Adrenal gland (tissue), 19 donors: ENCODE measurements at regions of chr2 and their contacts with region 1.

Region 1: DNA sequence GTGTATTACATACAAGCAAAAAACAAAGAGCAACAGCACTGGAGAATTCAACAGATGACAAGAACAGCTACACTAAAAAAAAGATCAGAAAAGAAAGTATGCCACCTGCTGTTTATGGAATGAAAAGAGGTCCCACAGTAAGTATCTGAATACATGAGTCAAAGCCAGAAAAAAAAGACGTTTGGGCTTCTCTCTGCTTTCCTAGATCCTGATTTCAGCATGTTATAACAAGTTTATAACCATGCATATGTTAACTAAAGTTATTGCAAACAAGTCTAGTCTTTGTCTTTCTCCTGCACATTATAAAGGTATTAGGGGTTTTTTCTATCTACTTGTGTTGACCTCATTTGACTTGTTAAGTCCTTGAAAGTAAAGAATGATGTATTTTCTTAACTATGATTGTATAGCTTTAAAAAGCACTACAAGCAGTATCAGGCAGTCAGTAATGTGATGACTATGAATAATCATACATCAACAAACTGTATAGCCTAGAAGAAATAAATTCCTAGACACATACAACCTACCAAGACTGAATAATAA is 108.5 kb upstream of the COL5A2 start:
- DNase-seq: no peak
- H3K4me3 ChIP-seq: no peak overlapping the region
- H3K27ac ChIP-seq: no peak overlapping the region
- H3K4me1 ChIP-seq: peaks cover 0 to 20% of the 10 kb centered on the region in 2 donors
- H3K27me3 ChIP-seq: no peaks in the 10 kb centered on the region
- CTCF ChIP-seq: peak; percentile 29 to 82 (median 60)
- POLR2A ChIP-seq: no peak

Region 2: DNA sequence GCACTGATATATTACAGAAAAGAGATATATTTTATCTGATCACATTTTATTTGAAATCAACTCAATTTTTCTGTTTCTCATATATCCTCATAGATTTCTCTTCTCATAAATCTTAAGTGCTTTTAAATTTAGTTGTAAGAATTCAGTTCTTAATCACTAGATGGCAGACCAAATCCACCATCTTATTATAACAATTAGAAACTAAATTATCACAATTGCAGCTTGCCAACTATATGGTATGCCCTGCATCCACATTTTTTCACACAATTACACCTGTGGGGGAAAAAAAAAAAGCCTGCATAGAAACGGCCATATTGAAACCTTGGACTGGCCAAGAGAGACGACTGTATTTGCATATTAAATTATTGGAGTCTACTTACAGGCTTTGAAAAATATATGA is 172.9 kb before region 1 on chr2:
- intact Hi-C with region 1: loop called in 1 of 2 experiments (anchors 10 kb)
- DNase-seq: no peak
- H3K4me3 ChIP-seq: no peak overlapping the region
- H3K27ac ChIP-seq: no peak overlapping the region
- H3K4me1 ChIP-seq: peaks cover 0 to 4% of the 10 kb centered on the region in 2 donors
- H3K27me3 ChIP-seq: no peaks in the 10 kb centered on the region
- CTCF ChIP-seq: peak in 4 of 6 experiments; percentile 17 to 38 (median 29)
- POLR2A ChIP-seq: no peak

Region 3: GRCh38 chr2:189142893-189143759 is 144.9 kb before region 1 on chr2:
- intact Hi-C with region 1: loop called in 1 of 2 experiments (anchors 10 kb)
- DNase-seq: peak; percentile 24 to 65 (median 45)
- H3K4me3 ChIP-seq: no peak overlapping the region
- H3K27ac ChIP-seq: no peak overlapping the region
- H3K4me1 ChIP-seq: no peaks in the 10 kb centered on the region
- H3K27me3 ChIP-seq: no peaks in the 10 kb centered on the region
- CTCF ChIP-seq: peak; percentile 65 to 92 (median 69)
- POLR2A ChIP-seq: no peak

Region 4: GRCh38 chr2:189191766-189192165 is 96.3 kb before region 1 on chr2:
- intact Hi-C with region 1: no loop called
- DNase-seq: no peak
- H3K4me3 ChIP-seq: no peak overlapping the region
- H3K27ac ChIP-seq: no peak overlapping the region
- H3K4me1 ChIP-seq: no peaks in the 10 kb centered on the region
- H3K27me3 ChIP-seq: no peaks in the 10 kb centered on the region
- CTCF ChIP-seq: no peak
- POLR2A ChIP-seq: no peak

Region 5: DNA sequence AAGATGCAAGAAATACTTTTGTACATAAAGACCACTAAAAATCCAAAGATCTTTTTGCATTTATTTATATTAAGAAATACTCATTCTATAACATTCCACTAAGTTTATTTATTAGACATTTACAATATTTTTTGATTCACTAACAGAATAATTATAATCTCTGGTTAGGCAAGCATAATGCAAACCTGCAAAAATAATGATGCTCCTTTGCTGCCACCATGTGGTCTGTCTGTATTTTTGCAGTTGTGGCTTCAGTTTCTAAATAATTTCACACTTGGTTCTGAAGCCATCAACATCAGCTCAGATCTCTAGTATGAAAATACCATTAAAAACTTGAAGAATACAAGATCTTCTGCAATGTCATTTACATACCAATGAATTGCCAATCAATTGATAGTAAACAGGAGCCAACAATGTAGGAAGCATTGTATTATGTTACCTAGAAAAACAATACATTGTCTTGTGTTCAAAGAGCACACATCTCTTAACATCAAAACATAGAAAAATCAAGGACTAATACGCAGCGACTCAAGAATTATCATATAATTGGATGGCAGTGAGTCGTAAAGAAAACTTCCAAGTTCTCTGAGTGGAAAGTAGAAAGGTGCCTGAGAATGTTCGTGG is 124.4 kb after region 1 on chr2:
- intact Hi-C with region 1: loop called in 1 of 2 experiments (anchors 5 kb)
- DNase-seq: peak in 5 of 7 donors; percentile 19 to 51 (median 35)
- H3K4me3 ChIP-seq: no peak overlapping the region
- H3K27ac ChIP-seq: no peak overlapping the region
- H3K4me1 ChIP-seq: peaks cover 0 to 8% of the 10 kb centered on the region in 2 donors
- H3K27me3 ChIP-seq: no peaks in the 10 kb centered on the region
- CTCF ChIP-seq: peak; percentile 53 to 90 (median 82)
- POLR2A ChIP-seq: no peak